ENCODE measurements at regions of chr20 and their contacts with region 1.

Region 1: DNA sequence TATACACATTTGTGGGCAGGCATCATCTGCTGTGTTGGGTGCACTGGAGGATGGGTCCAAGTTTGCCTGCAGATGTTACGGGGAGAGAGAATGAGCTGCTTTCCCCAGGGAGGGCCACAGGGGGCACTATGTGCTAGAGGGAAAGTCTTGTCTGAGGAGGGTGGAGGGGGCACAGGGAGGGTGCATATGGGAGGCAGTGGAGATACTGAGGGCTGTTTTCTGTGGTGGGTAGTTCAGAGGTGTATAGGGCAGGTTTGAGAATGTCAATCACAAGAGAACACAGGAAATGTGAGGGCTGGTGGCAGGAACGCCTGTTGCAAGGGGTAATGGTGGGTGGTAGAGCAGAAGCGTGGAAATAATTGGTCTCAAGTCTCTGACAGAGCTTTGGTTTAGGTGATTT is 7.7 kb upstream of the PTPRA start:
- DNase-seq: no peak
- ATAC-seq: no peak
- H3K4me3 ChIP-seq: no peak overlapping the region
- H3K27ac ChIP-seq: no peak overlapping the region
- H3K4me1 ChIP-seq: peaks cover 12% of the 10 kb centered on the region
- H3K27me3 ChIP-seq: no peaks in the 10 kb centered on the region
- CTCF ChIP-seq: no peak

Region 2: DNA sequence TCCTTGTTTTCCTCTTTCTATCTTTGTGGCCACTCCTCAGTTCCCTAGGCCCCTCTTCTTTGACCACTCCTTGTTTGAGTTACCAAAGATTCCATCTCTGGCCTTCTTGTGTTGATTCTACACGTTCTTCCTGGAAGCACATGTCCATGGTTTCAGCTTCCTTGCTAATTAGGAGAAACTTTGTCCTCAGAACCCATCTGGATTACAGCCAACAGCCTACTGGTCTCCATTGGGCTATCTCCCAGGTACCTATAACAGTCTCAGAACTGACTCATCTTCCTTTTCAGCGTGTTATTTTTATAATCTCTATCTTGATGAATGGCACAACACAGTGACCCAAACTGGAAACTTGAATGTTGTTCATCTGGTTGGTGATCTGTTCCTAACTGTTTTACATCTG is 25.1 kb after region 1 on chr20:
- CTCF ChIA-PET with region 1: no interaction called
- POLR2A ChIA-PET with region 1: no interaction called
- in situ Hi-C with region 1: no loop called
- intact Hi-C with region 1: no loop called
- DNase-seq: no peak
- ATAC-seq: no peak
- H3K4me3 ChIP-seq: no peak overlapping the region
- H3K27ac ChIP-seq: no peak overlapping the region
- H3K4me1 ChIP-seq: no peaks in the 10 kb centered on the region
- H3K27me3 ChIP-seq: no peaks in the 10 kb centered on the region
- CTCF ChIP-seq: no peak

Region 3: DNA sequence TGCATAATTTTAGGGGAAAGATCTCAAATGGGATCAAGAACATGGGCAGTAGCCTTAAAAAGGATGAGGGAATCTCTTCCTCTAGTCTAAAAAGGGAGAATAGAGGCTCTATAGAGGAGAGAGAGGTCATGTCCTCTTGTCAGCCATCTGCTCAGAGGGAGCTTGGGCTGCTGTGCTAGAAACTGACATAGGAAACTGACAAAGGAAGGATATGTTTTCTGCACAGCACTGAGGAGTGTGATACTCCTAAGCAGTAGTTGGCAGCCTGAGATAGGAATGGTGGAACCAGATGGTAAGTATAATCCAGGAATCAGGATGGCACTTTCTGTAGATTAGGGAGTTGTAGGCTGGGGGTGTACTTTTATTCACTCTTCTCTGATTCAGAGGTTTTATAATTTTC is 66.9 kb after region 1 on chr20:
- CTCF ChIA-PET with region 1: no interaction called
- POLR2A ChIA-PET with region 1: interaction called, 10 read pairs
- in situ Hi-C with region 1: no loop called
- intact Hi-C with region 1: no loop called
- DNase-seq: no peak
- ATAC-seq: no peak
- H3K4me3 ChIP-seq: no peak overlapping the region
- H3K27ac ChIP-seq: no peak overlapping the region
- H3K4me1 ChIP-seq: no peaks in the 10 kb centered on the region
- H3K27me3 ChIP-seq: no peaks in the 10 kb centered on the region
- CTCF ChIP-seq: no peak

Region 4: GRCh38 chr20:2984028-2984501 is 118.4 kb after region 1 on chr20:
- CTCF ChIA-PET with region 1: no interaction called
- POLR2A ChIA-PET with region 1: interaction called, 10 read pairs
- in situ Hi-C with region 1: no loop called
- intact Hi-C with region 1: no loop called
- DNase-seq: no peak
- ATAC-seq: no peak
- H3K4me3 ChIP-seq: no peak overlapping the region
- H3K27ac ChIP-seq: no peak overlapping the region
- H3K4me1 ChIP-seq: no peaks in the 10 kb centered on the region
- H3K27me3 ChIP-seq: no peaks in the 10 kb centered on the region
- CTCF ChIP-seq: no peak

Measured in Panc1 (cell line).